ENCODE measurements at regions of chr12 and their contacts with region 1.

Region 1: GRCh38 chr12:49866859-49867579 is 24.1 kb upstream of the BCDIN3D start:
- DNase-seq: peak; percentile 50
- H3K4me3 ChIP-seq: no peak overlapping the region
- H3K27ac ChIP-seq: no peak overlapping the region
- H3K4me1 ChIP-seq: no peaks in the 10 kb centered on the region
- H3K27me3 ChIP-seq: peaks cover 2% of the 10 kb centered on the region
- CTCF ChIP-seq: peak; percentile 97 to 99

Region 2: DNA sequence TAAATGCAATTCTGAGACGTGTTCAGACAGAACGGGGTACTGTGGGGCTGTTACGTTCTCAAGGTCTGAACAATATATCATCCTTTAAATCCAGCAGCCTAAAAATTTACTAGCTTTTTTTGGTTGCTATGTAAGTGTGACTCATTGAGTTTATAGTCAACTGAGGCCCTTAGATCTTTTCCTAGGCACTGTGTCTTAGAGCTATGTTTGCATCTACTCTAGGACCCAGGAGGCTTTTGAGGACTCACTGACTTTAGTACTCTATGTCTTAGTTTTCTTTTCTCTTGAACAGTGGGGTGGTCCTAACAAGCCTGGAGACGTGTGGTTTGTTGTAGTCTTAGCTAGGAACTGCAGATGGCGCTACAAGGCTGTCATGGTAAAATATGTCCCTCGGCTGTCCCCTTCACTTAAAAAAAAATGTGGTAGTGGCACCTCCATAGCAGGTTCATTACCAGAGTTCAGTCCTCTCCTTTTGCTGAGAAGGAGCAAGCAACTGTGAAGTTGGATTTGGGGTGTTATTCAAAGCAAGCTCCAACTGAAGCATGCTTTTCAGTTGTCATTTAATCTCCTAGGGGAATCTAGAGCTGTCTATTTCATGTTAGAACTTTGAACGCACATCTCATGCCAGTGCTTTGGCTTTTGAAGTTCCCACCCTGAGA is 508.4 kb before region 1 on chr12:
- CTCF ChIA-PET with region 1: no interaction called
- dilution Hi-C with region 1: no loop called
- in situ Hi-C with region 1: no loop called
- intact Hi-C with region 1: no loop called
- DNase-seq: peak; percentile 71
- H3K4me3 ChIP-seq: no peak overlapping the region
- H3K27ac ChIP-seq: peak overlapping the region; percentile 20
- H3K4me1 ChIP-seq: peaks cover 23% of the 10 kb centered on the region
- H3K27me3 ChIP-seq: no peaks in the 10 kb centered on the region
- CTCF ChIP-seq: peak; percentile 66 to 84

Region 3: DNA sequence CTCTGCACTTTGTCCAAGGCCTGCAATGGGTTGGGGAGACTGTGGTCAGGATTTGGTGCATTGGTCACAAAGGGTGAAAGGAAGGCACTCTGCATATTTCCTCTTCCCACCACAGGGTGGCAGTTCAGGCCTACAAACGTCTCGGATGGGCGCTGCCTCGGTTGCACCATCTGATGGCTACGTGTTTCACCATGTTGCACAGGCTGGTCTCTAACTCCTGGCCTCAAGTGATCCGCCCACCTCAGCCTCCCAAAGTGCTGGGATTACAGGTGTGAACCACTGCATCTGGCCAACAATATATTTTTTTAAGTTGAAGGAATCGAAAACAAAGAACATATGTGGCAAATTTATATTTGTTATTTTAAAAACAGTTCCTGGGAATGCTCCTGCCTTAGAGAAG is 90.6 kb before region 1 on chr12:
- CTCF ChIA-PET with region 1: no interaction called
- dilution Hi-C with region 1: no loop called
- in situ Hi-C with region 1: no loop called
- intact Hi-C with region 1: loop called (anchors 1 kb)
- DNase-seq: peak; percentile 64
- H3K4me3 ChIP-seq: no peak overlapping the region
- H3K27ac ChIP-seq: no peak overlapping the region
- H3K4me1 ChIP-seq: peaks cover 15% of the 10 kb centered on the region
- H3K27me3 ChIP-seq: no peaks in the 10 kb centered on the region
- CTCF ChIP-seq: peak; percentile 84 to 85

Region 4: GRCh38 chr12:49789992-49790391 is 77.0 kb before region 1 on chr12:
- CTCF ChIA-PET with region 1: no interaction called
- dilution Hi-C with region 1: no loop called
- in situ Hi-C with region 1: no loop called
- intact Hi-C with region 1: no loop called
- DNase-seq: no peak
- H3K4me3 ChIP-seq: no peak overlapping the region
- H3K27ac ChIP-seq: no peak overlapping the region
- H3K4me1 ChIP-seq: no peaks in the 10 kb centered on the region
- H3K27me3 ChIP-seq: no peaks in the 10 kb centered on the region
- CTCF ChIP-seq: no peak

Region 5: DNA sequence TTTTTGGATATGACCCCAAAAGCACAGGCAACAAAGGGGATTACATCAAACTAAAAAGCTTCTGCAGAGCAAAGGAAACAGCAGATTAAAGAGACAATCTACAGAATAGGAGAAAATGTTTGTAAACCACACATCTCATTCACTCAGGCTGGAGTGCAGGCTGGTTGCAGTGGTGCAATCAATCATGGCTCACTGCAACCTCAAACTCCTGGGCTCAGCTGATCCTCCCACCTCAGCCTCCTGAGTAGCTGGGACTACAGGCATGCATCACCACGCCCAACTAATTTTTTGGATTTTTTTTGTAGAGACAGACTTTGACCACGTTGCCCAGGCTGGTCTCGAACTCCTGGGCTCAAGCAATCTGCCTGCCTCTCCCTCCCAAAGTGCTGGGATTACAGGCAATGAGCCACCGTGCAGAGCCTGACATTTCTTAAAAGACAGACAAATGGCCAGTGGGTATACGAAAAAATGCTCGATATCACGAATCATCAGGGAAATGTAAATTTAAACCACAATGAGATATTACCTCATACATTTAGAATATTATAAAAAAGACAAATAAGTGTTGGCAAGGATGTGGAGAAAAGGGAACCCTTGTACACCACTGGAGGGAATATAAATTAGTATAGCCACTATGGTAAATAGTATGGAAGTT is 48.7 kb before region 1 on chr12:
- CTCF ChIA-PET with region 1: no interaction called
- dilution Hi-C with region 1: loop called (anchors 5 kb)
- in situ Hi-C with region 1: no loop called
- intact Hi-C with region 1: no loop called
- DNase-seq: no peak
- H3K4me3 ChIP-seq: no peak overlapping the region
- H3K27ac ChIP-seq: no peak overlapping the region
- H3K4me1 ChIP-seq: no peaks in the 10 kb centered on the region
- H3K27me3 ChIP-seq: no peaks in the 10 kb centered on the region
- CTCF ChIP-seq: no peak

Region 6: GRCh38 chr12:49903695-49904423 is 36.8 kb after region 1 on chr12 and contains the start of gene FAIM2:
- CTCF ChIA-PET with region 1: no interaction called
- dilution Hi-C with region 1: loop called (anchors 5 kb)
- in situ Hi-C with region 1: no loop called
- intact Hi-C with region 1: no loop called
- DNase-seq: no peak
- H3K4me3 ChIP-seq: no peak within 1 kb of the TSS
- H3K27ac ChIP-seq: no peak within 1 kb of the TSS
- H3K4me1 ChIP-seq: peaks cover 3% of the 10 kb centered on the region
- H3K27me3 ChIP-seq: no peaks in the 10 kb centered on the region
- CTCF ChIP-seq: no peak
- total RNA-seq, gene FAIM2: not detected

Region 7: GRCh38 chr12:49945394-49946080 is 78.5 kb after region 1 on chr12:
- CTCF ChIA-PET with region 1: no interaction called
- dilution Hi-C with region 1: no loop called
- in situ Hi-C with region 1: no loop called
- intact Hi-C with region 1: loop called (anchors 2 kb)
- DNase-seq: peak; percentile 67
- H3K4me3 ChIP-seq: no peak overlapping the region
- H3K27ac ChIP-seq: no peak overlapping the region
- H3K4me1 ChIP-seq: peaks cover 6% of the 10 kb centered on the region
- H3K27me3 ChIP-seq: no peaks in the 10 kb centered on the region
- CTCF ChIP-seq: peak; percentile 77 to 85

Region 8: GRCh38 chr12:50055831-50056638 is 189.0 kb after region 1 on chr12:
- CTCF ChIA-PET with region 1: no interaction called
- dilution Hi-C with region 1: loop called (anchors 25 kb)
- in situ Hi-C with region 1: loop called (anchors 10 kb)
- intact Hi-C with region 1: loop called (anchors 2 kb)
- DNase-seq: peak; percentile 52
- H3K4me3 ChIP-seq: peak overlapping the region in 1 of 3 experiments; percentile 16
- H3K27ac ChIP-seq: no peak overlapping the region
- H3K4me1 ChIP-seq: peaks cover 11% of the 10 kb centered on the region
- H3K27me3 ChIP-seq: peaks cover 3% of the 10 kb centered on the region
- CTCF ChIP-seq: peak; percentile 91 to 98

Region 9: GRCh38 chr12:50201978-50202521 is 335.0 kb after region 1 on chr12:
- CTCF ChIA-PET with region 1: no interaction called
- dilution Hi-C with region 1: no loop called
- in situ Hi-C with region 1: no loop called
- intact Hi-C with region 1: no loop called
- DNase-seq: peak; percentile 93
- H3K4me3 ChIP-seq: no peak overlapping the region
- H3K27ac ChIP-seq: peak overlapping the region; percentile 80
- H3K4me1 ChIP-seq: peaks cover 53% of the 10 kb centered on the region
- H3K27me3 ChIP-seq: no peaks in the 10 kb centered on the region
- CTCF ChIP-seq: no peak

Region 10: GRCh38 chr12:50351120-50352043 is 484.4 kb after region 1 on chr12:
- CTCF ChIA-PET with region 1: no interaction called
- dilution Hi-C with region 1: no loop called
- in situ Hi-C with region 1: no loop called
- intact Hi-C with region 1: no loop called
- DNase-seq: no peak
- H3K4me3 ChIP-seq: no peak overlapping the region
- H3K27ac ChIP-seq: no peak overlapping the region
- H3K4me1 ChIP-seq: peaks cover 11% of the 10 kb centered on the region
- H3K27me3 ChIP-seq: no peaks in the 10 kb centered on the region
- CTCF ChIP-seq: no peak

Measured in mammary epithelial cell (primary cell).